Panc1 (cell line): ENCODE measurements at regions of chr19 and their contacts with region 1.

Region 1: GRCh38 chr19:39435499-39436349 is at the start of gene RPS16:
- DNase-seq: peak; percentile 100
- ATAC-seq: peak; percentile 87
- H3K4me3 ChIP-seq: peak within 1 kb of the TSS; percentile 29 to 58
- H3K27ac ChIP-seq: peak within 1 kb of the TSS; percentile 84
- H3K4me1 ChIP-seq: peaks cover 77% of the 10 kb centered on the region
- H3K27me3 ChIP-seq: no peaks in the 10 kb centered on the region
- CTCF ChIP-seq: no peak
- total RNA-seq, gene RPS16: 27,832 TPM

Region 2: DNA sequence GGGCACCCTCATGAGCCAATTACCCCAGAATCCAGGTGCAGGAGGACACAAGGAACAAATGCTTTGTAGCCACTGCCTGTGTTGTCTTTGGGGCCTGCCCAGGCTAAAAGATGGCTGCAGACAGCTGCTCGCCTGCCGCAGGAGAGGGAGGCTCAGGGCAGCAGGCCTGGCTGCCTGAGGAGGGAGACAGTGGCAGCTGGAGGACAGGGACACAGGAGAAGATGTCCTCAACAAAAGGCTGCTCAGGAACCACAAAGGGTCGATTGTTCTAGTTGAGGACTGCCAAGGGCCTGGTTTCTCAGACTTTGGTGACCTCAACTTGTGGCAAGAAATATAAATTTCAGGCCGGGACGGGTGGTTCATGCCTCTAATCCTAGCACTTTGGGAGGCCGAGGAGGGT is 544.0 kb before region 1 on chr19:
- CTCF ChIA-PET with region 1: no interaction called
- POLR2A ChIA-PET with region 1: no interaction called
- in situ Hi-C with region 1: no loop called
- intact Hi-C with region 1: no loop called
- DNase-seq: no peak
- ATAC-seq: no peak
- H3K4me3 ChIP-seq: no peak overlapping the region
- H3K27ac ChIP-seq: no peak overlapping the region
- H3K4me1 ChIP-seq: no peaks in the 10 kb centered on the region
- H3K27me3 ChIP-seq: no peaks in the 10 kb centered on the region
- CTCF ChIP-seq: no peak

Region 3: GRCh38 chr19:39372047-39372802 is 63.5 kb before region 1 on chr19:
- CTCF ChIA-PET with region 1: interaction called, 3 read pairs
- POLR2A ChIA-PET with region 1: interaction called, 10 read pairs
- in situ Hi-C with region 1: no loop called
- intact Hi-C with region 1: no loop called
- DNase-seq: no peak
- ATAC-seq: peak; percentile 2
- H3K4me3 ChIP-seq: no peak overlapping the region
- H3K27ac ChIP-seq: no peak overlapping the region
- H3K4me1 ChIP-seq: no peaks in the 10 kb centered on the region
- H3K27me3 ChIP-seq: no peaks in the 10 kb centered on the region
- CTCF ChIP-seq: no peak

Region 4: GRCh38 chr19:39412100-39412866 is 23.4 kb before region 1 on chr19 and contains the start of gene PLEKHG2:
- CTCF ChIA-PET with region 1: interaction called, 22 read pairs
- POLR2A ChIA-PET with region 1: interaction called, 524 read pairs
- in situ Hi-C with region 1: no loop called
- intact Hi-C with region 1: loop called (anchors 1 kb)
- DNase-seq: peak; percentile 100
- ATAC-seq: peak; percentile 67
- H3K4me3 ChIP-seq: peak within 1 kb of the TSS; percentile 42 to 55
- H3K27ac ChIP-seq: peak within 1 kb of the TSS; percentile 92
- H3K4me1 ChIP-seq: peaks cover 58% of the 10 kb centered on the region
- H3K27me3 ChIP-seq: no peaks in the 10 kb centered on the region
- CTCF ChIP-seq: no peak
- total RNA-seq, gene PLEKHG2: 1,988 TPM

Region 5: DNA sequence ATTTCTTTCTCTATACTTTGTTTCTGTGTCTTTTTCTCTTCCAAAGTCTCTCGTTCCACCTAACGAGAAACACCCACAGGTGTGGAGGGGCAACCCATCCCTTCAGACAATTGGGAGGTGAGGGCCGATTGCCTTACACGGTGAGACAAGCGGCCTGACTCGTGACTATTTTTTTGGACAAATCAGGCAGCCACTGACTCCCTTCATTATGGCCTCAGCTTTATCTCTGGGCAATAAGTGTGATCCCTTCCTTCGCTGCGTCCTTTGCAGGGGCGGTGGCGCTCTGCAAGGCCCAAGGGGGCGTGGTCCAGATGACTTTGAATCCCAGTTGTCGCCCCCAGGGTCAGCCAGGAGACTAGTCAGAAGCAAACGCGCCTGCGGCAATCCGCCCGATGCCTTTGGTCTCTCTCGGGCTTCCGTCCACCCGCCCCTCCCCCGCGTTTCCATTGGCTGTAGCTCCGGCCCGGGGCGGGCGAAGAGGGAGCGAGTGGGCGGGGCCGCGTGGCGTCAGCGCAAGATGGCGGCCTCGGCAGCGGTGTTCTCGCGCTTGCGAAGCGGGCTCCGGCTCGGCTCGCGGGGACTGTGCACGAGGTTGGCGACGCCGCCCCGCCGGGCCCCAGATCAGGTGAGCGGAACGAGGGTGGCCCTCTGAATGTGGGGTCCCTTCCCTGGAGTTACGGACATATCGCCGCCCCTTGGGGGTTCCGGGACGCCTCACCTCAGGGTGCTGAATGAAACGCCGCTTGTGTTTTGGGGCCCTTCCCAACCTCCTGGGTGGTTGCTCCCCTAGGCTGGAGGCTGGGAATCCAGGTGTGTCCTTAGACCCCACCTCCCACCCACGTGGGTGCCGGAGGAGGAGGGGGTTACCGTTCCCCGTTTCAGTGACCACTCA is 44.9 kb after region 1 on chr19 and contains the start of gene TIMM50:
- CTCF ChIA-PET with region 1: interaction called, 91 read pairs
- POLR2A ChIA-PET with region 1: interaction called, 46 read pairs
- in situ Hi-C with region 1: no loop called
- intact Hi-C with region 1: no loop called
- DNase-seq: peak; percentile 100
- ATAC-seq: peak; percentile 96
- H3K4me3 ChIP-seq: peak within 1 kb of the TSS; percentile 39 to 55
- H3K27ac ChIP-seq: peak within 1 kb of the TSS; percentile 86
- H3K4me1 ChIP-seq: peaks cover 23% of the 10 kb centered on the region
- H3K27me3 ChIP-seq: no peaks in the 10 kb centered on the region
- CTCF ChIP-seq: no peak
- total RNA-seq, gene TIMM50: 1,837 TPM

Region 6: GRCh38 chr19:39532233-39533002 is 96.7 kb after region 1 on chr19 and contains the start of gene EID2B:
- CTCF ChIA-PET with region 1: interaction called, 193 read pairs
- POLR2A ChIA-PET with region 1: interaction called, 196 read pairs
- in situ Hi-C with region 1: no loop called
- intact Hi-C with region 1: loop called (anchors 1 kb)
- DNase-seq: peak; percentile 100
- ATAC-seq: peak; percentile 95
- H3K4me3 ChIP-seq: peak within 1 kb of the TSS; percentile 35 to 56
- H3K27ac ChIP-seq: peak within 1 kb of the TSS; percentile 80
- H3K4me1 ChIP-seq: peaks cover 25% of the 10 kb centered on the region
- H3K27me3 ChIP-seq: no peaks in the 10 kb centered on the region
- CTCF ChIP-seq: no peak
- total RNA-seq, gene EID2B: 37.7 TPM

Region 7: DNA sequence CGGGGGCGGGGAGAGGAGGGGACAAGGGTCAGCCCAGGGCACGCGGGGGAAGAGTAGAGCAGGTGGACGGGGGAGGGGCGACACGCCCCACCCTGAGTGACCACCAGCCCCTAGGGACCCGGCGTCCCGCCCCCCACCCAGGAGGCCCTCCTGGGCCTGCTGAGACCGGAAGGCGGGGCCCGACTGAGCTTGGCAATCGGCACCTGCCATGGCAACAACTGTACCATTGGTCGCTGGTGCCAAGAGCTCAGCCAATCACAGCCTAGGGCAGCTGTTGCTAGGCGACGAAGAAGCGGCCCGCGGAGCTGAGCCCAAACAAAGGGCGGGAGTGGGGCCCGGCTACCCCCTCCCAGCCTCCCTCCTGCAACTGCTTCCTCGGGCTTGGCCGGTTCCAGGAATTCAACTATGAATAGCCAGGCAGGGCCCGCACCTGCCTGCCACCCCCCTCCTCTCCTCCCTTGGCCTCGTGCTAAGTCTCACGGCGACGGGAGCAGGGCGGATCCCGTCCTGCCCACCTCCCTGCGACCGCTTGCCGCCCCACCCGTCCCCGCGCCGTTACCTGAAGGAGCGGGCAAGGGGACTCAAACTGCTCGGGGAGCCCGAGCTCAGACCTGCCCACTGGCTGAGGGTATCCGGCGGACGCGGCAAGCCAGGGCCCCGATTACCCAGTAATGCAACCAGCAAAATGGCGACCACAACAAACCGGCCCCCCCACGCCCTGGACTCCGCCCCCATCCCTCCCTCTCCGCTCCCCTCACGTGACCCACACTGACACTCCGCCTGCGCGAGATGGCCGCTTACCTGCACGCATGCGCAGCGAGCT is 398.0 kb after region 1 on chr19 and contains the start of gene DYRK1B:
- CTCF ChIA-PET with region 1: interaction called, 6 read pairs
- POLR2A ChIA-PET with region 1: interaction called, 25 read pairs
- in situ Hi-C with region 1: no loop called
- intact Hi-C with region 1: no loop called
- DNase-seq: peak; percentile 100
- ATAC-seq: peak; percentile 94
- H3K4me3 ChIP-seq: peak within 1 kb of the TSS; percentile 36 to 57
- H3K27ac ChIP-seq: peak within 1 kb of the TSS; percentile 76
- H3K4me1 ChIP-seq: peaks cover 26% of the 10 kb centered on the region
- H3K27me3 ChIP-seq: no peaks in the 10 kb centered on the region
- CTCF ChIP-seq: no peak
- total RNA-seq, gene DYRK1B: 322 TPM

Region 8: GRCh38 chr19:41050434-41050833 is 1614.7 kb after region 1 on chr19:
- CTCF ChIA-PET with region 1: no interaction called
- POLR2A ChIA-PET with region 1: no interaction called
- in situ Hi-C with region 1: no loop called
- intact Hi-C with region 1: no loop called
- DNase-seq: no peak
- ATAC-seq: no peak
- H3K4me3 ChIP-seq: no peak overlapping the region
- H3K27ac ChIP-seq: no peak overlapping the region
- H3K4me1 ChIP-seq: no peaks in the 10 kb centered on the region
- H3K27me3 ChIP-seq: no peaks in the 10 kb centered on the region
- CTCF ChIP-seq: no peak